ENCODE measurements at regions of chr1 and their contacts with region 1.

Region 1: GRCh38 chr1:89820422-89821321 is at the start of gene LRRC8D:
- DNase-seq: peak; percentile 79 to 86
- ATAC-seq: peak; percentile 85 to 94
- H3K4me3 ChIP-seq: peak within 1 kb of the TSS; percentile 83 to 88 (median 86)
- H3K27ac ChIP-seq: peak within 1 kb of the TSS; percentile 77 to 88 (median 78)
- H3K4me1 ChIP-seq: peaks cover 20 to 37% of the 10 kb centered on the region in 2 donors
- H3K27me3 ChIP-seq: no peaks in the 10 kb centered on the region
- CTCF ChIP-seq: peak in 2 of 5 experiments; percentile 20 to 21
- POLR2A ChIP-seq: peak; percentile 47 to 84
- total RNA-seq, gene LRRC8D: 3.0 to 15.0 (median 9.2) TPM

Region 2: GRCh38 chr1:89918127-89918793 is 97.6 kb after region 1 on chr1:
- in situ Hi-C with region 1: no loop called
- intact Hi-C with region 1: loop called (anchors 5 kb)
- DNase-seq: peak; percentile 48 to 76
- ATAC-seq: peak; percentile 97 to 99
- H3K4me3 ChIP-seq: no peak overlapping the region
- H3K27ac ChIP-seq: peak overlapping the region in 3 of 4 donors; percentile 50 to 75 (median 60)
- H3K4me1 ChIP-seq: peaks cover 11 to 34% of the 10 kb centered on the region in 2 donors
- H3K27me3 ChIP-seq: no peaks in the 10 kb centered on the region
- CTCF ChIP-seq: no peak
- POLR2A ChIP-seq: no peak

Region 3: GRCh38 chr1:89994805-89995597 is 174.3 kb after region 1 on chr1 and contains the start of gene ZNF326:
- in situ Hi-C with region 1: no loop called
- intact Hi-C with region 1: loop called (anchors 5 kb)
- DNase-seq: peak; percentile 91 to 95
- ATAC-seq: peak; percentile 91 to 92
- H3K4me3 ChIP-seq: peak within 1 kb of the TSS; percentile 72 to 94 (median 88)
- H3K27ac ChIP-seq: peak within 1 kb of the TSS; percentile 86 to 100 (median 98)
- H3K4me1 ChIP-seq: peaks cover 37 to 39% of the 10 kb centered on the region in 2 donors
- H3K27me3 ChIP-seq: no peaks in the 10 kb centered on the region
- CTCF ChIP-seq: peak in 1 of 5 experiments; percentile 13
- POLR2A ChIP-seq: peak; percentile 97 to 98
- total RNA-seq, gene ZNF326: 5.8 to 10.8 (median 9.2) TPM

Measured in gastrocnemius medialis (tissue), 4 donors.